ENCODE measurements at regions of chr20 and their contacts with region 1.

Region 1: DNA sequence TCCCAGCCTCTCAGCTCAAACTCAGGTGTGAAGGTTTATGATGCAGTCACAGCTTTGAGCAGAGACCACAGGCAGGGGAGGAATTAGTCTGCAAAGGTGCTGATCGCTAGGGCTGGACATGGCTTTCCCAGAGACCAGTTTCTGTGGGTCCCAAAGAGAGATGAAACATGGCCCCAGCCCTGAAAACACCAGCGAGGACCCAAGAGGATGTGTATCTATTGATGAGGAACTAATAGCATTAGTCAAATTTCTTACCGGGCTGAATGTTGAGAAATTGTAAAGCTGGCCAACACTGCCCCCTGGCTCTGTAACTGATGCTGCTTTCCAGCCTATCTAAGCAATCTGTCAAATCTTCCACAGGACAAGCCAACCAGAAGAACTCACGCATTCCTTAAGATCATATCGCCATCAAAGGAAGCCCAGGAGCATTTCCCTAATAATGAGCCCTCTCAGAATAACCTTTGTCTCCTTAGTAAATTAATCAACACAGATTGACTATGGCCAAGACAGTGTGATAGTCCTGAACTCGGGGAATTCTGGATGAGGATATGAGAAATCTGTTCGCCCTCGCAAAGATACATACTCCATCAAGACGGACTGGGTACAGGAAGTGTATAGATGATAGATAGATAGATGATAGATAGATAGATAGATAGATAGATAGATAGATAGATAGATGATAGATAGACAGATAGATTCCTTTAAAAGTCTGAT is 7.8 kb upstream of the ACSS1 start:
- DNase-seq: peak; percentile 75
- H3K4me3 Mint-ChIP-seq: no peak overlapping the region
- H3K27ac Mint-ChIP-seq: no peak overlapping the region
- H3K4me1 Mint-ChIP-seq: peaks cover 2% of the 10 kb centered on the region
- H3K27me3 Mint-ChIP-seq: peaks cover 13% of the 10 kb centered on the region

Region 2: GRCh38 chr20:24909086-24909780 is 156.5 kb before region 1 on chr20:
- CTCF ChIA-PET with region 1: no interaction called
- POLR2A ChIA-PET with region 1: no interaction called
- intact Hi-C with region 1: no loop called
- DNase-seq: no peak
- H3K4me3 Mint-ChIP-seq: no peak overlapping the region
- H3K27ac Mint-ChIP-seq: no peak overlapping the region
- H3K4me1 Mint-ChIP-seq: no peaks in the 10 kb centered on the region
- H3K27me3 Mint-ChIP-seq: no peaks in the 10 kb centered on the region

Region 3: DNA sequence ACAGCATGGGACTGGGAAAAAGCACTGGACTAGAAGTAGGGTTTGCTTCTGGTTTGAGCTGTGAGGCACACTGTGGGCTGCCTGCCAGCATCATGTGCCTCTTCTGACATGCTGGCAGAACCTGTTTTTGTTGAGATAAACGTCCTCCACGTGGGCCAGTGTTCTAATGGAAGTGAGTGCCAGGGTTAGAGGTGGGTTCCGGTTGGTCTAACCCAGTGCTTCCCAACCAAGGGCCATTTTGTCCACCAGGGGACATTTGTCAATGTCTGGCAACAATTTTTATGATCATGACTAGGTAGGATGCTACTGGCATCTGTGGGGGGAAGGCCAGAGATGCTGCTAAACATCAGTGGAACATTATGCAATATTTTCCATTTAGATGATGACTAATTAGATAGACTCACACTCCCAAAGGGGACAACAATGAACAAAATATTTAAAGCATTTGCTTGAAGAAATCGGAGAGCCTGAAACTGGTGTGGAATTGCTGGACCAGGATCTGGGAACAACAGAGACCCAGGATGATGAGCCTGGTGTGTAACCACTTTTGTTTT is 65.4 kb before region 1 on chr20:
- CTCF ChIA-PET with region 1: interaction called, 92 read pairs
- POLR2A ChIA-PET with region 1: no interaction called
- intact Hi-C with region 1: loop called (anchors 1 kb)
- DNase-seq: no peak
- H3K4me3 Mint-ChIP-seq: no peak overlapping the region
- H3K27ac Mint-ChIP-seq: peak overlapping the region; percentile 47
- H3K4me1 Mint-ChIP-seq: peaks cover 5% of the 10 kb centered on the region
- H3K27me3 Mint-ChIP-seq: no peaks in the 10 kb centered on the region

Region 4: GRCh38 chr20:25032478-25033280 is 33.1 kb before region 1 on chr20:
- CTCF ChIA-PET with region 1: interaction called, 10 read pairs
- POLR2A ChIA-PET with region 1: no interaction called
- intact Hi-C with region 1: no loop called
- DNase-seq: no peak
- H3K4me3 Mint-ChIP-seq: no peak overlapping the region
- H3K27ac Mint-ChIP-seq: no peak overlapping the region
- H3K4me1 Mint-ChIP-seq: peaks cover 24% of the 10 kb centered on the region
- H3K27me3 Mint-ChIP-seq: no peaks in the 10 kb centered on the region

Region 5: GRCh38 chr20:25187220-25187619 is 121.4 kb after region 1 on chr20:
- CTCF ChIA-PET with region 1: no interaction called
- POLR2A ChIA-PET with region 1: no interaction called
- intact Hi-C with region 1: no loop called
- DNase-seq: no peak
- H3K4me3 Mint-ChIP-seq: no peak overlapping the region
- H3K27ac Mint-ChIP-seq: no peak overlapping the region
- H3K4me1 Mint-ChIP-seq: no peaks in the 10 kb centered on the region
- H3K27me3 Mint-ChIP-seq: peaks cover 32% of the 10 kb centered on the region